ENCODE measurements at regions of chr11 and their contacts with region 1.

Region 1: GRCh38 chr11:116499396-116500003 is 273.3 kb downstream of the BUD13 start:
- DNase-seq: peak; percentile 64
- ATAC-seq: peak; percentile 98
- H3K4me3 ChIP-seq: no peak overlapping the region
- H3K27ac ChIP-seq: no peak overlapping the region
- H3K4me1 ChIP-seq: no peaks in the 10 kb centered on the region
- H3K27me3 ChIP-seq: peaks cover 25% of the 10 kb centered on the region
- CTCF ChIP-seq: peak; percentile 71 to 84 (median 76)
- POLR2A ChIP-seq: no peak
- RAD21 ChIP-seq: peak; percentile 83

Region 2: DNA sequence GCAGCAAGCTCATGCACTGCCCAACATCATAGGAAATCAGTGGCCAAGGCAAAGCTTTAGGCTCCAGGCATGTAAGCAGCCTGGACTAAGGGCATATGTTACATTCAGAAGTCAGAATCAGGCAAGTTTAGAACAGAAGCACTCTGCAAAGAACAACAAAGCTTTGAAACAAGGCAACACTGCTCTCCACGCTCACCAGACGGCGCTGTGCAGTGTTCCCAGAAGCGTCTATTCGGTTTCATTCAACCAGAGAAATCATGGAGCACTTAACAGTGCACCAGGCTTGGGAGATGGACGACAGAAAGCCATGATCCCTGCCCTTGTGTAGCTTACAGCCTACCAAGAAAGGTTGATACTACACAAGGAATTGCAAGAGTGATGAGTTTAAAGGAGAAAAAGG is 282.5 kb before region 1 on chr11:
- CTCF ChIA-PET with region 1: interaction called, 5 read pairs
- POLR2A ChIA-PET with region 1: no interaction called
- RAD21 ChIA-PET with region 1: no interaction called
- intact Hi-C with region 1: loop called (anchors 5 kb)
- DNase-seq: peak; percentile 27
- ATAC-seq: peak; percentile 89
- H3K4me3 ChIP-seq: no peak overlapping the region
- H3K27ac ChIP-seq: no peak overlapping the region
- H3K4me1 ChIP-seq: no peaks in the 10 kb centered on the region
- H3K27me3 ChIP-seq: peaks cover 14% of the 10 kb centered on the region; the same call in 1 of the 2 replicates
- CTCF ChIP-seq: peak; percentile 61 to 91 (median 87)
- POLR2A ChIP-seq: no peak
- RAD21 ChIP-seq: peak; percentile 52

Region 3: DNA sequence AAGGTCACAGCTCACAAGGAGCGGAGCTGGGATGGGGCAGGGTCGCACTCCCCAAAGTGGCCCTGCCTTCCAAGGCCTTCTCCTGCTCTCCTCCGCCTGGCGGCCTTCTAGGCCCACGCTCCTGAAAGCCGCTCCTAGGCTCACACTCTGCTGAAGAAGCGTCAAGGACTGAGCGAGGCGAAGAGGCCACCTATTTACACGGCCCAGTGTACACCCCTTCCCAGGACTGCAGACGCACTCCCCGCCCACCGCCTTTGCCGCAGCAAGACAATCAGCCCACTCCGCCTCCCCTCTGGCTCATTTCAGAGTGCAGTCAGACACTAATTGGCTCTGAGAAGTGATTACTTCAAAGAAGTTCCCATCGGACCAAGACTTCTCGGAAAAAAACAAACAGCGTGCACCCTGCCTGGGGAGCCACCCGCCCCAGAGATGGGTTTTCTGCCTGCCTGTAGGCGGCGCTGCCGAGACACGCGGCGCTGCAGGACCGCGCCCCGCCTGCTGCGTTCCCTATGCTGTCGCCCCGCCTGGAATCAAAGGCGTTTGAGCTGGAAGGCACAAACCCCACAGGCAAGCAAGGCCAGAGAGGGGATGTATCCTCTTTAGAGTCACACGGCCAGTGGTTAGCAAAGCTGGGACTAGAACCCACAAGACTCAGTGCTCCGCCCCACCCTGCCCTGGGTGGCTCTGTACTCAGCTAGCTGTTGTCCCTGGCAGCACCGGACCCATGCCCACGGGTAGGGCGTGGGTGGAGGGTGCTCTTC is 141.5 kb before region 1 on chr11:
- CTCF ChIA-PET with region 1: interaction called, 14 read pairs
- POLR2A ChIA-PET with region 1: no interaction called
- RAD21 ChIA-PET with region 1: no interaction called
- intact Hi-C with region 1: loop called (anchors 1 kb)
- DNase-seq: peak; percentile 37
- ATAC-seq: peak; percentile 97
- H3K4me3 ChIP-seq: no peak overlapping the region
- H3K27ac ChIP-seq: no peak overlapping the region
- H3K4me1 ChIP-seq: no peaks in the 10 kb centered on the region
- H3K27me3 ChIP-seq: peaks cover 34% of the 10 kb centered on the region
- CTCF ChIP-seq: peak; percentile 51 to 95 (median 92); a peak in 5 of 6 replicates
- POLR2A ChIP-seq: no peak
- RAD21 ChIP-seq: peak; percentile 72

Region 4: GRCh38 chr11:116454020-116454645 is 45.4 kb before region 1 on chr11:
- CTCF ChIA-PET with region 1: interaction called, 35 read pairs
- POLR2A ChIA-PET with region 1: no interaction called
- RAD21 ChIA-PET with region 1: interaction called in 1 of 2 experiments, 4 read pairs
- intact Hi-C with region 1: loop called (anchors 1 kb)
- DNase-seq: no peak
- ATAC-seq: peak; percentile 92
- H3K4me3 ChIP-seq: no peak overlapping the region
- H3K27ac ChIP-seq: no peak overlapping the region
- H3K4me1 ChIP-seq: no peaks in the 10 kb centered on the region
- H3K27me3 ChIP-seq: no peaks in the 10 kb centered on the region
- CTCF ChIP-seq: peak; percentile 61 to 64 (median 61)
- POLR2A ChIP-seq: no peak
- RAD21 ChIP-seq: peak; percentile 65

Region 5: GRCh38 chr11:116605543-116606459 is 106.3 kb after region 1 on chr11:
- CTCF ChIA-PET with region 1: no interaction called
- POLR2A ChIA-PET with region 1: no interaction called
- RAD21 ChIA-PET with region 1: no interaction called
- intact Hi-C with region 1: no loop called
- DNase-seq: peak; percentile 32
- ATAC-seq: peak; percentile 95
- H3K4me3 ChIP-seq: no peak overlapping the region
- H3K27ac ChIP-seq: no peak overlapping the region
- H3K4me1 ChIP-seq: peaks cover 0 to 5% of the 10 kb centered on the region in 2 experiments; a peak in 1 of 4 replicates
- H3K27me3 ChIP-seq: peaks cover 7% of the 10 kb centered on the region; the same call in 1 of the 2 replicates
- CTCF ChIP-seq: peak; percentile 21 to 73 (median 63); a peak in 4 of 6 replicates
- POLR2A ChIP-seq: no peak
- RAD21 ChIP-seq: peak; percentile 39; the same call in 1 of the 2 replicates

Measured in HCT116 (cell line).